ENCODE measurements at regions of chr5 and their contacts with region 1.

Region 1: GRCh38 chr5:129767906-129768380 is 20.0 kb downstream of the MINAR2 start:
- DNase-seq: peak; percentile 84
- H3K4me3 Mint-ChIP-seq: no peak overlapping the region
- H3K27ac Mint-ChIP-seq: no peak overlapping the region
- H3K4me1 Mint-ChIP-seq: peaks cover 29% of the 10 kb centered on the region
- H3K27me3 Mint-ChIP-seq: no peaks in the 10 kb centered on the region
- CTCF ChIP-seq: peak; percentile 93

Region 2: DNA sequence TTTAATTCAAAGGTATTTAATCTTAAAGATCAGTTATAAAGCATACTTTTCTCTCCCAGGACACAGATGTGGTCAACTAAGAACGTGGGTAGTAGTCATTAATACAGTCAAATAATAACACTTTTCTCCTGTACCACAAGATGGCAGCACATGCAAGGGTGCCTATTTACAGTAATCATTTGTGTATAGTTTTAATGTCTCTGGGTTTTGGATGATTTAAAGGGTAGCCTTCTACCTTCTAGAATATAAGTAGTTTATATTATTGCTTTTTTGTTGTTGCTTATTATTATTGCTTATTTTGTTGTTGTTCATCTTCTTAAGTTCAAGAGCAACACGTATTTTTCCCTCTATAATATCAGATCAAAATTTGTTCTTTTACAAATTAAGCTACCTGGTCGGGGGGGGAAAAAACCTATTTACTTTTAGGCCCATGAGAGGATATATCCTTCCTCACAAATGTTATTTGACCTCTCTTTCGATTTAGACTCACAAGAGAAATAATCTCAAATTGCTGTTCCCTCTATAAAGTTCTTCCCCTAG is 862.3 kb before region 1 on chr5:
- CTCF ChIA-PET with region 1: no interaction called
- intact Hi-C with region 1: loop called (anchors 1 kb)
- DNase-seq: peak; percentile 63
- H3K4me3 Mint-ChIP-seq: no peak overlapping the region
- H3K27ac Mint-ChIP-seq: no peak overlapping the region
- H3K4me1 Mint-ChIP-seq: no peaks in the 10 kb centered on the region
- H3K27me3 Mint-ChIP-seq: no peaks in the 10 kb centered on the region
- CTCF ChIP-seq: peak; percentile 45

Region 3: DNA sequence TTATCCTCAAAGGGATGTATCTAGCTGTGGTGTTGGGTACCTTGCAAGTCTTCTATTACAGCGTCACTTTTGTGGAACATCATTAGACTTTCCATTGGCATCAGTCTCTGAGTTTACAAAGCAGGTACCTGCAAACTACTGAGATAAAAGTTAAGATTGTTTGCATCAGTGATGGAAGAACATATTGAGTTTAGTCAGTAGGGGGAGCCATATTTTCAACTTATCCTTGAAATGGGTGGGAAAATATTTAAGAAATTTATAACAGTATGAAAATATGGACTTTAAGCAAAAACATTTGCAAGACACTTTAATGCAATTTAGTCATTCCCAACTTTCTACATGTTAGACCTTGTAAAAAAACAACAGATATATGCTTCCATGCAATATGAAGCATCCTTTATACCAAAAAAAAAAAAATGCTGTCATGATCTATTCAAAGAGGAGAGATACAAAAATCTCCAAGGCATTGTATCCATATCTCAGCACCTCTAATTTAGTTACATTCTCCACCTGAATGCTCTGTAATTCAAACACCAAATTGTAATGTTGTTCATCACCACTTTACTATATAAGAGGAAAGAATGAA is 406.4 kb before region 1 on chr5:
- CTCF ChIA-PET with region 1: no interaction called
- intact Hi-C with region 1: loop called (anchors 1 kb)
- DNase-seq: no peak
- H3K4me3 Mint-ChIP-seq: no peak overlapping the region
- H3K27ac Mint-ChIP-seq: no peak overlapping the region
- H3K4me1 Mint-ChIP-seq: no peaks in the 10 kb centered on the region
- H3K27me3 Mint-ChIP-seq: no peaks in the 10 kb centered on the region
- CTCF ChIP-seq: peak; percentile 64

Region 4: DNA sequence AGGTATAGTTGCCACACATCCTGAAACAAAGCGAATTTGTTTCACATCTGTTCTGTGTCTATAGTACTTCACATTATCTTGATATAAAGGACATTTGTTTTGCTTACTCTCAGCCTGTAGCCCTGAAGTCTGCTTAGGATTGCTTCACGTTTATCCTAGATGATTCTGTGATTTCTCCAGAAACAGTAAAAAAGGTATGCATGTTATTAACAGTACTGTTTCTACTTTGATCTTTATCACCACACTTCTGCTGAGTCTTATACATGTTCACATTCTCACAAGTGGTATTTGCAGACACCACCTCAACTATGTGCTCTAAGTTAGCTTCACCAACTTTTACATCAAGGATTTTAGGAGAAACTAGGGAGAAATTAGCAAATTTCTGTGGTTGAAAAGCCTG is 355.2 kb before region 1 on chr5:
- CTCF ChIA-PET with region 1: no interaction called
- intact Hi-C with region 1: no loop called
- DNase-seq: no peak
- H3K4me3 Mint-ChIP-seq: no peak overlapping the region
- H3K27ac Mint-ChIP-seq: no peak overlapping the region
- H3K4me1 Mint-ChIP-seq: no peaks in the 10 kb centered on the region
- H3K27me3 Mint-ChIP-seq: no peaks in the 10 kb centered on the region
- CTCF ChIP-seq: no peak

Region 5: GRCh38 chr5:129541644-129542251 is 226.2 kb before region 1 on chr5:
- CTCF ChIA-PET with region 1: no interaction called
- intact Hi-C with region 1: loop called (anchors 1 kb)
- DNase-seq: peak; percentile 4
- H3K4me3 Mint-ChIP-seq: no peak overlapping the region
- H3K27ac Mint-ChIP-seq: no peak overlapping the region
- H3K4me1 Mint-ChIP-seq: no peaks in the 10 kb centered on the region
- H3K27me3 Mint-ChIP-seq: no peaks in the 10 kb centered on the region
- CTCF ChIP-seq: peak; percentile 45

Region 6: GRCh38 chr5:129718471-129719090 is 49.4 kb before region 1 on chr5:
- CTCF ChIA-PET with region 1: no interaction called
- intact Hi-C with region 1: no loop called
- DNase-seq: no peak
- H3K4me3 Mint-ChIP-seq: no peak overlapping the region
- H3K27ac Mint-ChIP-seq: no peak overlapping the region
- H3K4me1 Mint-ChIP-seq: peaks cover 6% of the 10 kb centered on the region
- H3K27me3 Mint-ChIP-seq: no peaks in the 10 kb centered on the region
- CTCF ChIP-seq: no peak

Region 7: GRCh38 chr5:130141659-130142320 is 373.8 kb after region 1 on chr5:
- CTCF ChIA-PET with region 1: interaction called, 10 read pairs
- intact Hi-C with region 1: loop called (anchors 1 kb)
- DNase-seq: peak; percentile 75
- H3K4me3 Mint-ChIP-seq: no peak overlapping the region
- H3K27ac Mint-ChIP-seq: no peak overlapping the region
- H3K4me1 Mint-ChIP-seq: no peaks in the 10 kb centered on the region
- H3K27me3 Mint-ChIP-seq: no peaks in the 10 kb centered on the region
- CTCF ChIP-seq: peak; percentile 71